ENCODE measurements at regions of chr5 and their contacts with region 1.

Region 1: GRCh38 chr5:149268928-149269557 is 2.6 kb upstream of the AFAP1L1 start:
- DNase-seq: peak in 7 of 9 donors; percentile 40 to 67 (median 57)
- ATAC-seq: peak; percentile 70
- H3K4me3 ChIP-seq: no peak overlapping the region
- H3K4me3 Mint-ChIP-seq: peak overlapping the region in 2 of 10 donors; percentile 3 to 10
- H3K27ac ChIP-seq: no peak overlapping the region
- H3K27ac Mint-ChIP-seq: peak overlapping the region in 1 of 9 donors; percentile 2
- H3K4me1 ChIP-seq: peaks cover 0 to 6% of the 10 kb centered on the region in 2 donors
- H3K4me1 Mint-ChIP-seq: peaks cover 7 to 22% (median 16%) of the 10 kb centered on the region in 7 donors
- H3K27me3 ChIP-seq: peaks cover 0 to 3% of the 10 kb centered on the region in 2 donors
- H3K27me3 Mint-ChIP-seq: peaks cover 17 to 67% (median 31%) of the 10 kb centered on the region in 5 donors

Region 2: GRCh38 chr5:148820461-148821395 is 448.3 kb before region 1 on chr5:
- CTCF ChIA-PET with region 1: no interaction called
- POLR2A ChIA-PET with region 1: no interaction called
- intact Hi-C with region 1: loop called in 1 of 2 experiments (anchors 1 kb)
- DNase-seq: peak in 4 of 9 donors; percentile 9 to 38 (median 20)
- ATAC-seq: peak; percentile 57
- H3K4me3 ChIP-seq: no peak overlapping the region
- H3K4me3 Mint-ChIP-seq: no peak overlapping the region
- H3K27ac ChIP-seq: no peak overlapping the region
- H3K27ac Mint-ChIP-seq: no peak overlapping the region
- H3K4me1 ChIP-seq: peaks cover 0 to 8% of the 10 kb centered on the region in 2 donors
- H3K4me1 Mint-ChIP-seq: peaks cover 3 to 15% (median 8%) of the 10 kb centered on the region in 7 donors
- H3K27me3 ChIP-seq: no peaks in the 10 kb centered on the region
- H3K27me3 Mint-ChIP-seq: peaks cover 0 to 51% (median 0%) of the 10 kb centered on the region in 5 donors

Region 3: GRCh38 chr5:149060325-149060724 is 208.7 kb before region 1 on chr5:
- CTCF ChIA-PET with region 1: no interaction called
- POLR2A ChIA-PET with region 1: no interaction called
- intact Hi-C with region 1: no loop called
- DNase-seq: no peak
- ATAC-seq: no peak
- H3K4me3 ChIP-seq: no peak overlapping the region
- H3K4me3 Mint-ChIP-seq: no peak overlapping the region
- H3K27ac ChIP-seq: no peak overlapping the region
- H3K27ac Mint-ChIP-seq: no peak overlapping the region
- H3K4me1 ChIP-seq: no peaks in the 10 kb centered on the region
- H3K4me1 Mint-ChIP-seq: no peaks in the 10 kb centered on the region
- H3K27me3 ChIP-seq: no peaks in the 10 kb centered on the region
- H3K27me3 Mint-ChIP-seq: peaks cover 10 to 28% (median 14%) of the 10 kb centered on the region in 5 donors

Region 4: DNA sequence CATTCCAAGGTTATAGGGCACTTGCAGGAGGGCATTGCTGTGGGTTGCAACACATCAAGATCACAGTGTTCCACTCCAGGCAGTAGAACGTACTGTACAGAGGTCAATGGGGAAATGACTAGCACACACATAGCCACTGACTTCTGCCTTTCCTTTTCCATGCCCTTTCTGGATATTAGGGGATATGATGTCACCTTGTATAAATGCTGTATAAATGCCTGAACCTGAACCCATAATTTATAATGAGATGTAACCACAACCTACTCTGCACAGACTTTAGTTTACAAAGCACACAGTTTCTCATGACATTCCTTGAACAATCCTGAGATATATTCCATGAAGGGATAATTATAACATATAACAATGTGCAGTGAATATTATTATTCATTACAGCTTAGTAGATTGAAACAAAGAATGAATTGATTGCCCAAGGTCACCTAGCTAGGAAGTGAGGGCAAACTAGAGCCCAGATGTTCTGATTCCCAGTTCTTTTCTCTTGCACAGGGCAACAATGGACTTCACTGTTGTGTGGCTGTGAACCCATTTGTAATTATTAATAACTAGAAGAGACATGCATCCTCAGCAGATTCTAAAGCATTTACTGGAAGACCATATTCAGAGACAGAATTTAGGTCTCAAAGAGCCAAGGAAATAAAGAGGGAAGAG is 133.4 kb before region 1 on chr5:
- CTCF ChIA-PET with region 1: interaction called, 142 read pairs
- POLR2A ChIA-PET with region 1: interaction called, 5 read pairs
- intact Hi-C with region 1: no loop called
- DNase-seq: no peak
- ATAC-seq: no peak
- H3K4me3 ChIP-seq: no peak overlapping the region
- H3K4me3 Mint-ChIP-seq: no peak overlapping the region
- H3K27ac ChIP-seq: no peak overlapping the region
- H3K27ac Mint-ChIP-seq: no peak overlapping the region
- H3K4me1 ChIP-seq: no peaks in the 10 kb centered on the region
- H3K4me1 Mint-ChIP-seq: peaks cover 0 to 2% (median 0%) of the 10 kb centered on the region in 7 donors
- H3K27me3 ChIP-seq: no peaks in the 10 kb centered on the region
- H3K27me3 Mint-ChIP-seq: peaks cover 13 to 34% (median 33%) of the 10 kb centered on the region in 5 donors

Region 5: GRCh38 chr5:149212198-149212951 is 56.7 kb before region 1 on chr5:
- CTCF ChIA-PET with region 1: interaction called, 11 read pairs
- POLR2A ChIA-PET with region 1: no interaction called
- intact Hi-C with region 1: no loop called
- DNase-seq: no peak
- ATAC-seq: no peak
- H3K4me3 ChIP-seq: no peak overlapping the region
- H3K4me3 Mint-ChIP-seq: no peak overlapping the region
- H3K27ac ChIP-seq: no peak overlapping the region
- H3K27ac Mint-ChIP-seq: peak overlapping the region in 3 of 9 donors; percentile 3 to 24 (median 17)
- H3K4me1 ChIP-seq: no peaks in the 10 kb centered on the region
- H3K4me1 Mint-ChIP-seq: peaks cover 0 to 19% (median 11%) of the 10 kb centered on the region in 7 donors
- H3K27me3 ChIP-seq: no peaks in the 10 kb centered on the region
- H3K27me3 Mint-ChIP-seq: peaks cover 0 to 1% (median 0%) of the 10 kb centered on the region in 5 donors

Region 6: GRCh38 chr5:149240354-149240998 is 28.6 kb before region 1 on chr5:
- CTCF ChIA-PET with region 1: interaction called, 8 read pairs
- POLR2A ChIA-PET with region 1: interaction called, 9 read pairs
- intact Hi-C with region 1: loop called (anchors 1 to 2 kb)
- DNase-seq: peak; percentile 46 to 94 (median 90)
- ATAC-seq: peak; percentile 93
- H3K4me3 ChIP-seq: peak overlapping the region; percentile 2
- H3K4me3 Mint-ChIP-seq: peak overlapping the region; percentile 38 to 79 (median 66)
- H3K27ac ChIP-seq: peak overlapping the region; percentile 67
- H3K27ac Mint-ChIP-seq: peak overlapping the region; percentile 83 to 98 (median 93)
- H3K4me1 ChIP-seq: peaks cover 21 to 39% of the 10 kb centered on the region in 2 donors
- H3K4me1 Mint-ChIP-seq: peaks cover 8 to 71% (median 43%) of the 10 kb centered on the region in 7 donors
- H3K27me3 ChIP-seq: no peaks in the 10 kb centered on the region
- H3K27me3 Mint-ChIP-seq: peaks cover 0 to 23% (median 1%) of the 10 kb centered on the region in 5 donors

Region 7: DNA sequence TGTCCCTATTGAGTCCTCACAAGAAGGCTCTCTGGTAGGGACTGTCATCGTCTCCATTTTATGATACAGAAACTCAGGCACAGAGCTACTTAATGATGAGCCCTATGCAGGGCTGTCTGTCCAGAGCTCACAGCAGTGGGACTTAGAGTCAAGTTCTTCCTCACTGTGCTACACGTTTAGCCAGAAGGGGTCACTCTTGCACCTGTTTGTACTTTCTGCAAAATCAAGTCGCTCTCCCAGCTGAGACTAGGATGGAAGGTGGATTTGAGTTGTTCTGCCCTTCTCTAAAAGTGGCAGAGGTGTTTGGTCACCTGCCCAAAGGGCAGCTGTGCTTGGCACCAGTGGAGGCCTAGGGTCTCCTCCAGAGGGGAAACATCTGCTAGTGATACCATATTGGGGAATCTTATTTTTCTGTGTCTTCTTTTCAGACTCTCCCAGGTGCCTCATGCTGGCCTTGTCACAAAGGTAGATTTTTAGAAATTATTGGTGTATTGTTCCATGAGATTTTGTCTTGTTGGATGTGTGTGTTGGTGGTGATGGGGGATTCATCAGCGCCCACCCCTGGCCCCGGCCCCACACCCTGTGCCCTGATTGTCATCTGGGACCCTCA is 565.3 kb after region 1 on chr5:
- CTCF ChIA-PET with region 1: no interaction called
- POLR2A ChIA-PET with region 1: no interaction called
- intact Hi-C with region 1: no loop called
- DNase-seq: peak in 8 of 9 donors; percentile 29 to 63 (median 42)
- ATAC-seq: peak; percentile 68
- H3K4me3 ChIP-seq: no peak overlapping the region
- H3K4me3 Mint-ChIP-seq: no peak overlapping the region
- H3K27ac ChIP-seq: no peak overlapping the region
- H3K27ac Mint-ChIP-seq: no peak overlapping the region
- H3K4me1 ChIP-seq: no peaks in the 10 kb centered on the region
- H3K4me1 Mint-ChIP-seq: peaks cover 0 to 9% (median 0%) of the 10 kb centered on the region in 7 donors
- H3K27me3 ChIP-seq: no peaks in the 10 kb centered on the region
- H3K27me3 Mint-ChIP-seq: no peaks in the 10 kb centered on the region

Measured in naive thymus-derived CD4-positive, alpha-beta T cell (primary cell).